Dorsolateral prefrontal cortex (tissue), 120 donors: ENCODE measurements at regions of chr20 and their contacts with region 1.

Region 1: GRCh38 chr20:58650776-58651558 is at the start of gene STX16:
- DNase-seq: peak; percentile 63 to 92 (median 86)
- H3K4me3 ChIP-seq: peak within 1 kb of the TSS; percentile 66 to 100 (median 98)
- H3K27ac ChIP-seq: peak within 1 kb of the TSS; percentile 68 to 98 (median 91)
- H3K27me3 ChIP-seq: no peaks in the 10 kb centered on the region
- CTCF ChIP-seq: peak in 55 of 56 donors; percentile 27 to 81 (median 56)
- total RNA-seq, gene STX16: 54.5 to 110 (median 84.5) TPM

Region 2: GRCh38 chr20:58202044-58202443 is 448.9 kb before region 1 on chr20:
- intact Hi-C with region 1: no loop called
- DNase-seq: no peak
- H3K4me3 ChIP-seq: no peak overlapping the region
- H3K27ac ChIP-seq: no peak overlapping the region
- H3K27me3 ChIP-seq: no peaks in the 10 kb centered on the region
- CTCF ChIP-seq: no peak

Region 3: DNA sequence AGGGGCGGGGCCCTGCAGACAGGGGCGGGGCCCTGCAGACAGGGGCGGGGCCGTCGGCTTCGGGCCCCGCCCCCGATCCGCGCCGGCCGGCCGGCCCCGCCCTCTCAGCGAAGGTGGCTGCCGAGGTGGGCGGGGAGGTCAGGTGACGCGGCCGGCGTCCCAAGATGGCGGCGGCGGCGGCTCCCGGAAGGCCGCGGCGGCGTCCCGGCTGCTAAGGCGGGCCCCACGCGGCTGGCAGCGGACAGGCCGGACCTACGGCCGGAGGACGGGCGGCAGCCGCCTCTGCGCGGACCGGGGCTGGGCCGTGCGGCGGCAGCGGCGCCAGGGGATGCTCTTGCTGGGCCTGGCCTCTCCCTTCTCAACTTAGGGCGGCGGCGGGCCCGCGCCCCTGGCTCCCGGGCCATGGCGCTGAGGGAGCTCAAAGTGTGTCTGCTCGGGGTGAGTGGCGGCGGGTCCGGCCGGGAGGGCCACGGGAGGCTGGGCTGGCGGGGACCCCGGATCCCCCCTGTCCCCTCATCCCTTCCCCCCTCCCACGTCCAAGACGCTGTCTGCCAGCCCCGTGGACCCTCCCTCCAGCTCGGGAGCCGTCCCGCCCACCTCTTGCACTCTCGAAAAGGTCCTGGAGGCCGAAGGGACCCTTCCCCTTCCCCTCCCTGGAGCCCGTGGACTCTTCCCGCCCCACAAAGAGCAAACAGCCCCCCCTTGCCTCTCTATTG is 341.2 kb before region 1 on chr20 and contains the start of gene RAB22A:
- intact Hi-C with region 1: loop called (anchors 10 kb)
- DNase-seq: peak; percentile 49 to 89 (median 68)
- H3K4me3 ChIP-seq: peak within 1 kb of the TSS; percentile 68 to 100 (median 97)
- H3K27ac ChIP-seq: peak within 1 kb of the TSS in 57 of 59 donors; percentile 4 to 93 (median 80)
- H3K27me3 ChIP-seq: no peaks in the 10 kb centered on the region
- CTCF ChIP-seq: peak in 5 of 56 donors; percentile 9 to 30 (median 23)
- total RNA-seq, gene RAB22A: 25.8 to 51.7 (median 38.9) TPM

Region 4: DNA sequence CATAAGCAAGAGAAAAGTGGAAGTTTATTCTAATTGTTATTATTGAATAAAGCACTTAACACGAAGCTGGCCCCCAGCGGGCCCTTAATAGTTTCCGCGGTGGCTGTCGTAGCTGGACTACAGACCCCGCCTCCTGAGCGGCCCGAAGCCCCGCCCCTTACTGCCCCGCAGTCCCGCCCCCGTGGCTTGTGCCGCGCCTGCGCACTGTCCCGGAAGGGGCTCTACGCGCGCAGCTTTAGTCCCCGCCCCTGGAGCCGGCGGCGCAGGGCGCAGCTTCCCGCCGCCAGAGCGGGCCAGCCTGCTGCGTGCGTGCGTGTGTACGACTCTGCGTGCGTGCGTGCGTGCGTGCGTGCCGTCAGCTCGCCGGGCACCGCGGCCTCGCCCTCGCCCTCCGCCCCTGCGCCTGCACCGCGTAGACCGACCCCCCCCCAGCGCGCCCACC is 262.1 kb before region 1 on chr20 and contains the start of gene VAPB:
- intact Hi-C with region 1: loop called (anchors 2 to 5 kb)
- DNase-seq: peak; percentile 90 to 98 (median 93)
- H3K4me3 ChIP-seq: peak within 1 kb of the TSS; percentile 57 to 99 (median 86)
- H3K27ac ChIP-seq: peak within 1 kb of the TSS in 57 of 59 donors; percentile 32 to 95 (median 85)
- H3K27me3 ChIP-seq: no peaks in the 10 kb centered on the region
- CTCF ChIP-seq: peak in 30 of 56 donors; percentile 5 to 49 (median 26)
- total RNA-seq, gene VAPB: 59.1 to 124 (median 96.7) TPM

Region 5: GRCh38 chr20:58692594-58693226 is 41.7 kb after region 1 on chr20 and contains the start of gene NPEPL1:
- intact Hi-C with region 1: loop called (anchors 2 to 5 kb)
- DNase-seq: peak in 4 of 10 donors; percentile 2 to 61 (median 30)
- H3K4me3 ChIP-seq: peak within 1 kb of the TSS; percentile 29 to 68 (median 52)
- H3K27ac ChIP-seq: peak within 1 kb of the TSS in 56 of 59 donors; percentile 15 to 91 (median 78)
- H3K27me3 ChIP-seq: no peaks in the 10 kb centered on the region
- CTCF ChIP-seq: no peak
- total RNA-seq, gene NPEPL1: 15.1 to 48.4 (median 25.2) TPM

Region 6: GRCh38 chr20:58839474-58839874 is 188.5 kb after region 1 on chr20:
- intact Hi-C with region 1: loop called in 1 of 2 experiments (anchors 10 kb)
- DNase-seq: peak in 5 of 10 donors; percentile 15 to 60 (median 27)
- H3K4me3 ChIP-seq: peak overlapping the region in 35 of 59 donors; percentile 4 to 44 (median 24)
- H3K27ac ChIP-seq: no peak overlapping the region
- H3K27me3 ChIP-seq: peaks cover 0 to 68% (median 37%) of the 10 kb centered on the region in 45 donors
- CTCF ChIP-seq: peak in 48 of 56 donors; percentile 12 to 59 (median 40)